GM12878 (cell line): ENCODE measurements at regions of chr17 and their contacts with region 1.

Region 1: DNA sequence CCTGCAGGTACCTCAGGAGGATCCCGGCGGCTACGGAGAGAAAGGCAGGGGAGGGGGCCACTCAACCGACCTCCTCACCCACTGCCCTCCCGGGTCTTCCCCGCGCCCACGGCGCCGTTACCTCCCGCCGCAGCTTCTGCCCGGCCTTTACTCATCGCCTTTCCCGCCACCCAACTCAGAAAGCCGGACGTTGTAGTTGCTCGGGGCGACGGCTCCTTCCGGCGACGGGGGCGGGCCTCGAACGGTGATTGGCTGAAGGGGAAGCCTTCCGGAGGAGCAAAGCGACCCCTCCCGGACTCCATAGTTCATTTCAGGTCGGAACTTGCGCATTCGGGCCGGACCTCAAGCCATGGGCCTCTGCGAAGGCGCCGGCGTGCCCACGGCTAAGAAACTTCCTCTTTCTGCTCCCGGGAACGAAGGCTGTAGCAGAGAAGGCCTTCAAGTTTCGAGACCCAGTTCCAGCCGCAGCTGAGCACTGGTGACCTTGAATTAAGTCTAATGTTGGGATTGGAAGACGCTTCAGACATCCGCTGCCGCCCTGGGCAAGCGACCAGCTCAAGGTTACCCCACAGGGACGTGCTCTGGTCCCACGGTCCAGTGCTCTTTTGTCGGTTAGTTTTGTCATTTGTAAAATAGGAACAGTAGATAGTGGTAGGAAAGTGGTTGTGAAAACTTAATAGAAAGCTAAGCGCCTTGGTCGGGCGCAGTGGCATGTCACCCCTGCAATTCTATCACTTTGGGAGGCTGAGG is at the start of gene PSMC3IP:
- DNase-seq: peak; percentile 76
- ATAC-seq: peak; percentile 87
- H3K4me3 ChIP-seq: peak within 1 kb of the TSS; percentile 79
- H3K27ac ChIP-seq: peak within 1 kb of the TSS; percentile 89
- H3K4me1 ChIP-seq: peaks cover 16% of the 10 kb centered on the region
- H3K27me3 ChIP-seq: no peaks in the 10 kb centered on the region
- CTCF ChIP-seq: peak; percentile 34 to 64 (median 56); a peak in 4 of 6 replicates
- EP300 ChIP-seq: no peak
- POLR2A ChIP-seq: peak; percentile 85
- RAD21 ChIP-seq: no peak
- polyA plus RNA-seq, gene PSMC3IP: 6.8 to 7.1 TPM

Region 2: DNA sequence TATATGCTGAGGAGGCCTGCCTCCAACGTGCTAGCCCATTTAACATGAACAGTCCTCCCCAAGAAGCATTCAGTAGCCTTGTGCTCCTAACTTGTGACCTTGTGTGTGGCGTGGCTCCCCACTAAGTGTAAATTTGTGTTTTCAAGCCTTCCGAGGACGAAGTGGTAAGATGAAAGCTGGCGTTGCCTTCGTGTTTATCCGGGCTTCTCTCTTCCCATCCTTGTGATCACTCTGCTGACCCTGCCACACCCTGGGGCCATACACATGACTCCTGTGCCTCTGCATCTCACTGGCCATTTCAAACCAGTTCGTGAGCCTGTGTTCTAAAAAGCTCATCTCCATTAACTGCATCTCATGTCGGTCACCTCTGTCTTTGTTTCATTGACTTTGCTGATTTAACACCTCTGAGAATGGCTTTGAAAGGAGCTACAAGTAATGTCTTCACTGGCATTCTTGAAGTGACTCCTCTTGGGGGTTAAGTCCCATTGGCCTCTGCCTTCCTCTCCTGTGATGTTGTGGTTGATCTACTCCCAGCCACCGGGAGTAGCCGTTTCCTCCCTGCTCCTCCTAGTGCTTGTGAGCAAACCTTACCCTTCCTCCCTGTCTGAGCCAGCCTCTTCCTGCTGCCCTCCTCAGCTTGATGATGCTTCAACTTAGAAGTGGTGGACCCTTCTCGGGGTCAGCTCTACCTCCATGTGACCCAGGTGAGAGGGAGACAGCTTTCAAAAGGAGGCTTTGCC is 69.1 kb before region 1 on chr17:
- CTCF ChIA-PET with region 1: no interaction called
- POLR2A ChIA-PET with region 1: no interaction called
- RAD21 ChIA-PET with region 1: no interaction called
- SMC1A ChIA-PET with region 1: no interaction called
- in situ Hi-C with region 1: no loop called
- intact Hi-C with region 1: no loop called
- DNase-seq: no peak
- ATAC-seq: no peak
- H3K4me3 ChIP-seq: no peak overlapping the region
- H3K27ac ChIP-seq: no peak overlapping the region
- H3K4me1 ChIP-seq: peaks cover 9% of the 10 kb centered on the region
- H3K27me3 ChIP-seq: no peaks in the 10 kb centered on the region
- CTCF ChIP-seq: no peak
- EP300 ChIP-seq: no peak
- POLR2A ChIP-seq: no peak
- RAD21 ChIP-seq: no peak

Region 3: DNA sequence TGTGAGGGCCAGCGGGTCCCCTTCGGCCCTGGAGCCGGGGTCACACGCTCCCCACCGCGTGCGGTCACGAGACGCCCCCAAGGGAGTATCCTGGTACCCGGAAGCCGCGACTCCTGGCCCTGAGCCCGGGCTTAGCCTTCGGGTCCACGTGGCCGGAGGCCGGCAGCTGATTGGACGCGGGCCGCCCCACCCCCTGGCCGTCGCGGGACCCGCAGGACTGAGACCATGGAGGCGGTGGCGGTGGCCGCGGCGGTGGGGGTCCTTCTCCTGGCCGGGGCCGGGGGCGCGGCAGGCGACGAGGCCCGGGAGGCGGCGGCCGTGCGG is 41.7 kb before region 1 on chr17 and contains the start of gene NAGLU:
- CTCF ChIA-PET with region 1: interaction called, 7 read pairs
- POLR2A ChIA-PET with region 1: interaction called, 6 read pairs
- RAD21 ChIA-PET with region 1: interaction called, 17 read pairs
- SMC1A ChIA-PET with region 1: interaction called, 4 read pairs
- in situ Hi-C with region 1: no loop called
- intact Hi-C with region 1: loop called (anchors 1 kb)
- DNase-seq: peak; percentile 72
- ATAC-seq: peak; percentile 91
- H3K4me3 ChIP-seq: peak within 1 kb of the TSS; percentile 77
- H3K27ac ChIP-seq: peak within 1 kb of the TSS; percentile 75
- H3K4me1 ChIP-seq: peaks cover 19% of the 10 kb centered on the region
- H3K27me3 ChIP-seq: no peaks in the 10 kb centered on the region
- CTCF ChIP-seq: no peak
- EP300 ChIP-seq: 0 out of 4 replicates have a peak, but pooled peaks of 1 of the 2 experiments have one; percentile 59
- POLR2A ChIP-seq: peak; percentile 73
- RAD21 ChIP-seq: no peak
- polyA plus RNA-seq, gene NAGLU: 0.23 to 0.69 TPM

Region 4: GRCh38 chr17:42598905-42599304 is 21.2 kb after region 1 on chr17:
- CTCF ChIA-PET with region 1: interaction called, 25 read pairs
- POLR2A ChIA-PET with region 1: interaction called, 26 read pairs
- RAD21 ChIA-PET with region 1: interaction called, 58 read pairs
- SMC1A ChIA-PET with region 1: interaction called, 69 read pairs
- in situ Hi-C with region 1: no loop called
- intact Hi-C with region 1: no loop called
- DNase-seq: no peak
- ATAC-seq: no peak
- H3K4me3 ChIP-seq: no peak overlapping the region
- H3K27ac ChIP-seq: no peak overlapping the region
- H3K4me1 ChIP-seq: peaks cover 8% of the 10 kb centered on the region
- H3K27me3 ChIP-seq: no peaks in the 10 kb centered on the region
- CTCF ChIP-seq: no peak
- EP300 ChIP-seq: no peak
- POLR2A ChIP-seq: no peak
- RAD21 ChIP-seq: no peak

Region 5: DNA sequence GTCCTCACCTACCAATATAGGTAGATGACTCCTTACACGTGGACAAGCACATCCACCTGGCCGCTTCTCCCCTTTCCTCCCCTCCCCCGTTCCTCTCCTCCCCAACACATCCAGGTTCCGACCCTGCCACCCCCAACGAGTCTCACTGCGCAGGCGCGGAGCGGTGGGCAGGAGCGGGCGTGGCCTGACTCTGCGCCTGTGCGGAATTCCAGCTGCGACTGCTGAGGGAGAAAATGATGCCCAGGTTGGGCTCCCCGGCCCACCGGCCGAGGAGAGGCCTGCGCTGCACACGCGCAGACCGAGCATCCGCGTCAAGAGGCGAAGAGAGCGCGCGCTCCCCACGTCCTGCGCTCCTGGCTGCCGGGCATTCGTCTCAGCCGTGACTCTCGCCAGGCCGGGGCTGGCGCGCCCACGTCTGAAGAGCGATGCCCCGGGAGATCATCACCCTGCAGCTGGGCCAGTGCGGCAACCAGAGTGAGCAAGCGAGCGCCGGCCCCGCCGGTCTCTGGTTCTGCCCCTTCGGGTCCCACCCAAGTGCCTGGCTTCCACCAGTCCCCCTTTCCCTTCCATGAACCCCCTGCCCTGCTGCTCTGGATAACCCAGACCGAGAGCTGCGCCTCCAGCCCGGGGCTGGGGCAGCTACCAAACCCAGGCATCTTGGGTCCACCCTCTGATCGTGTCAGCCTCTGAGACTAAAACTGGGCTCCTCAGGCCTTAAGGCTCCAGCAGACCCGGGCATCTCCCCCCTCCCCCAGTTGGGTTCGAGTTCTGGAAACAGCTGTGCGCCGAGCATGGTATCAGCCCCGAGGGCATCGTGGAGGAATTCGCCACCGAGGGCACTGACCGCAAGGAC is 81.6 kb after region 1 on chr17 and contains the start of gene TUBG2:
- CTCF ChIA-PET with region 1: interaction called, 26 read pairs
- POLR2A ChIA-PET with region 1: interaction called, 3 read pairs
- RAD21 ChIA-PET with region 1: interaction called, 7 read pairs
- SMC1A ChIA-PET with region 1: interaction called, 8 read pairs
- in situ Hi-C with region 1: no loop called
- intact Hi-C with region 1: loop called (anchors 5 kb)
- DNase-seq: no peak
- ATAC-seq: peak; percentile 73
- H3K4me3 ChIP-seq: peak within 1 kb of the TSS; percentile 77
- H3K27ac ChIP-seq: peak within 1 kb of the TSS; percentile 42; the same call in 1 of the 2 replicates
- H3K4me1 ChIP-seq: peaks cover 33% of the 10 kb centered on the region
- H3K27me3 ChIP-seq: no peaks in the 10 kb centered on the region
- CTCF ChIP-seq: no peak
- EP300 ChIP-seq: no peak
- POLR2A ChIP-seq: peak; percentile 73
- RAD21 ChIP-seq: no peak
- polyA plus RNA-seq, gene TUBG2: 1.2 to 1.8 TPM

Region 6: DNA sequence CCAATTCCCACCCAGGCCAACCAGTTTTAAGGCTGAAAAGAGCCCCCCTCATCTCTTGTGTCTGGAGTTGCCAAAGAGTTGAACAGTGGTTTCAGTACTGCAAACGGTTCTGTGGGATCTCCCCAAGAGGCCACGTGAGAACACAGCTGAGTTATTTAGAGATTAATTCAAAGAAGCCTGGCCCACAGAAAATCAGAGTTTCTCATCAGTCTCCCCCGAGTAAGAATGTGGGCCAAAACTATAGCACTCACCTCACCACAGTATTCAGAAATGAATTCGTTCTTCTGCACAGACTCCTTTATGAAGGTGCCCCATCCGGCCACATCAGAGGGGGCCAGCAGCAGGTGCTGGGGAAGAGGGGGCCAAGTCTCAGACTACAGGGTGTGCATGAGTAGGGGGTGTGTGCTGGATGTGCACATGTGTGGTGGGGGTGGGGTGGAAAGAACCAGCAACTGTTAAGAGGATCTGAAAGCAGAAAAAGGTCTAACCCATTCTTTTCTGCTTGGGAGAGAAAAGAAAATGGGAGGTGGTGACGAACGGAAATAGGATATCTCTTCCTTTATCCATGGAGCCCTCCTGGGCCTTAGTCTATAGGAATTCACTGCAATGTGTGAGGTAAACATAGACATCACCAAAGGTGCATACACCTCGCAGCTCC is 127.3 kb after region 1 on chr17:
- CTCF ChIA-PET with region 1: interaction called, 17 read pairs
- POLR2A ChIA-PET with region 1: interaction called, 12 read pairs
- RAD21 ChIA-PET with region 1: interaction called, 19 read pairs
- SMC1A ChIA-PET with region 1: interaction called, 11 read pairs
- in situ Hi-C with region 1: no loop called
- intact Hi-C with region 1: no loop called
- DNase-seq: peak; percentile 94
- ATAC-seq: peak; percentile 92
- H3K4me3 ChIP-seq: peak overlapping the region; percentile 46; the same call in 1 of the 2 replicates
- H3K27ac ChIP-seq: peak overlapping the region; percentile 92
- H3K4me1 ChIP-seq: peaks cover 50% of the 10 kb centered on the region
- H3K27me3 ChIP-seq: no peaks in the 10 kb centered on the region
- CTCF ChIP-seq: no peak
- EP300 ChIP-seq: peak; percentile 68 to 95
- POLR2A ChIP-seq: 0 out of 2 replicates have a peak, but pooled peaks have one; percentile 15
- RAD21 ChIP-seq: no peak; the same call in 1 of the 2 replicates

Region 7: GRCh38 chr17:42773290-42774035 is 195.8 kb after region 1 on chr17 and contains the start of gene VPS25:
- CTCF ChIA-PET with region 1: interaction called, 15 read pairs
- POLR2A ChIA-PET with region 1: interaction called, 5 read pairs
- RAD21 ChIA-PET with region 1: interaction called, 11 read pairs
- SMC1A ChIA-PET with region 1: interaction called, 11 read pairs
- in situ Hi-C with region 1: loop called (anchors 10 kb)
- intact Hi-C with region 1: no loop called
- DNase-seq: no peak
- ATAC-seq: peak; percentile 93
- H3K4me3 ChIP-seq: peak within 1 kb of the TSS; percentile 75
- H3K27ac ChIP-seq: peak within 1 kb of the TSS; percentile 86
- H3K4me1 ChIP-seq: peaks cover 26% of the 10 kb centered on the region
- H3K27me3 ChIP-seq: no peaks in the 10 kb centered on the region
- CTCF ChIP-seq: peak in 1 of 3 experiments; percentile 13; a peak in 1 of 6 replicates
- EP300 ChIP-seq: no peak
- POLR2A ChIP-seq: peak; percentile 97
- RAD21 ChIP-seq: no peak
- polyA plus RNA-seq, gene VPS25: 131 to 185 TPM

Region 8: GRCh38 chr17:42997984-42998938 is 420.6 kb after region 1 on chr17 and contains the start of gene RPL27:
- CTCF ChIA-PET with region 1: interaction called, 9 read pairs
- POLR2A ChIA-PET with region 1: no interaction called
- RAD21 ChIA-PET with region 1: interaction called, 21 read pairs
- SMC1A ChIA-PET with region 1: interaction called, 8 read pairs
- in situ Hi-C with region 1: no loop called
- intact Hi-C with region 1: no loop called
- DNase-seq: peak; percentile 100
- ATAC-seq: peak; percentile 97
- H3K4me3 ChIP-seq: peak within 1 kb of the TSS; percentile 95
- H3K27ac ChIP-seq: peak within 1 kb of the TSS; percentile 82
- H3K4me1 ChIP-seq: peaks cover 3% of the 10 kb centered on the region; the same call in 1 of the 2 replicates
- H3K27me3 ChIP-seq: no peaks in the 10 kb centered on the region
- CTCF ChIP-seq: peak; percentile 83 to 89 (median 88)
- EP300 ChIP-seq: peak in 1 of 2 experiments; percentile 73; a peak in 2 of 4 replicates
- POLR2A ChIP-seq: peak; percentile 95
- RAD21 ChIP-seq: peak; percentile 60
- polyA plus RNA-seq, gene RPL27: 4,376 to 4,686 TPM